ENCODE measurements at regions of chr3 and their contacts with region 1.

Region 1: DNA sequence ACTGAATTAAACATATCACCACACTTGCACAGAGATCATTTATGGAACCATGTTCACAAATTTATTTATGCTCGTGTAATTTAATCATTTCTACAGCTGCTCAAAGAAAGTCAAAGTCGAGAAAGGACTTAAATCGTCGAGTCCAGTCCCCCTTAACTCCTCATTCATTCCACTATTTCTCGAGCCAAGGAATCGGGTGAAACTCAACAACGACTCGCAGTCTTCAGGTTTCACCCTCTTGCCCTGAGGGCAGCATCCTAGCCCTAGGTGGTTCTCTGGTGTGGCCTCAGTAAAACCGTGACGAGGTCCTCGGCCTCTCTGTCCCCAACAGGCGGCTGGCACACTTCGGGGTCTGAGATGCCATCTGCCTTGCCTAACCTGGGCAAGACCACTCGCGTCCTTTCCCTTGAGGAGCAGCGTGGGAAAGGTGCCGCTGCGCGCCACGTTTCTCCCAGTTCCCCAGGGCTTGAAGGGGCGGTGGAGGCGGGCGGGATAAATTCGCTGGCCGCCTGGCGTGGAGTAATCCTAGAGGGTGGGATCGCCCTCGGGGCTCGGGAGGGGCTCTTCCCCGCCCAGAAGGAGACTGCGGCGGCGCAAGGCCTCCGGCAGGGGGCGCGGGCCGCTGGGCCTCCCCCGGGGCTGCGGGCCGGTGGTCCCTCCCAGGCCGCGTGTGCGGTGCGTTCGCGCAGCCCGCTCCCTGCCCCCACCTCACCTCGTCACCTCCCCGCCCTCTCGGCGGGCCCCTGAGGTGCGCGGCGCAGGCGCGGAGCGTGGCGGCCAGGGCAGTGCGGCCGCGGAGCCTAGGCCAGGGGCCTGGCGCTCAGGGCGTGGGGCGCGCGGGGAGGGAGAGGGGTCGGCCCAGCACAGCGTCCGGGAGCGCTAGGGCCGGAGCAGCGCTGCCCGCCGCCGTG is at the start of gene ZNF639:
- DNase-seq: peak; percentile 91
- ATAC-seq: peak; percentile 87
- total RNA-seq, gene ZNF639: 34.4 TPM

Region 2: GRCh38 chr3:179015551-179016020 is 307.0 kb before region 1 on chr3:
- intact Hi-C with region 1: loop called (anchors 5 kb)
- DNase-seq: no peak
- ATAC-seq: peak; percentile 59

Region 3: DNA sequence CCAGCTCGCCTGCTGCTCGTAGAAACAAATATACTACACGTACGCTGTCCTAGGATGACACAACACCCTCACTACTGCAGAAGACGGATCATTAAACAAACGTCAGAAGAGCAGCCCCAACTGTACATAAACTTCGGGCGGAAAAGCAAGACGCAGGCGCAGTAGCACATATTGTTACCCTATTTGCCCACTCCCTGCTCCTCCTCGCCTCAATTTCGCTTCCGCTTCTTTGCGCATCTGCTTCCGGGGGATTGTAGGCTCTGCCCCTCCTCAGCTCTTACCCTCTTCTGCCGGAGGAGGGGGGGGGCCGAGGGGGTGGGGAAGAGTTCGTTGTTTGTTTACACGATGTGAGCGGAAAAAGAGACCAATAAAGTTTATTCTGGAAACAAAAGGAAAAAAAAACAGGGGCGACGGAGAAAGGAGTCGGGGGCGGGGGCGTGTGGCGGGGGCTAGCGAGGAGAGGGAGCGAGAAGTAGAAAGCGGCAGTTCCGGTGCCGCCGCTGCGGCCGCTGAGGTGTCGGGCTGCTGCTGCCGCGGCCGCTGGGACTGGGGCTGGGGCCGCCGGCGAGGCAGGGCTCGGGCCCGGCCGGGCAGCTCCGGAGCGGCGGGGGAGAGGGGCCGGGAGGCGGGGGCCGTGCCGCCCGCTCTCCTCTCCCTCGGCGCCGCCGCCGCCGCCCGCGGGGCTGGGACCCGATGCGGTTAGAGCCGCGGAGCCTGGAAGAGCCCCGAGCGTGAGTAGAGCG is 174.5 kb before region 1 on chr3 and contains the start of gene PIK3CA:
- intact Hi-C with region 1: loop called (anchors 2 kb)
- DNase-seq: peak; percentile 92
- ATAC-seq: peak; percentile 97
- total RNA-seq, gene PIK3CA: 20.9 TPM